ENCODE measurements at regions of chr22 and their contacts with region 1.

Region 1: GRCh38 chr22:37623075-37624016 is 14.7 kb downstream of the GGA1 start:
- DNase-seq: peak; percentile 85
- H3K4me3 ChIP-seq: no peak overlapping the region
- H3K27ac ChIP-seq: peak overlapping the region in 3 of 4 donors; percentile 82 to 92 (median 91)
- H3K4me1 ChIP-seq: peaks cover 0 to 50% (median 38%) of the 10 kb centered on the region in 4 donors
- H3K27me3 ChIP-seq: no peaks in the 10 kb centered on the region
- CTCF ChIP-seq: peak; percentile 51 to 99 (median 65)
- EP300 ChIP-seq: no peak
- POLR2A ChIP-seq: no peak

Region 2: GRCh38 chr22:37476389-37477329 is 146.7 kb before region 1 on chr22:
- intact Hi-C with region 1: no loop called
- DNase-seq: no peak
- H3K4me3 ChIP-seq: no peak overlapping the region
- H3K27ac ChIP-seq: no peak overlapping the region
- H3K4me1 ChIP-seq: no peaks in the 10 kb centered on the region
- H3K27me3 ChIP-seq: peaks cover 5 to 80% (median 22%) of the 10 kb centered on the region in 3 donors
- CTCF ChIP-seq: no peak
- EP300 ChIP-seq: no peak
- POLR2A ChIP-seq: no peak

Region 3: GRCh38 chr22:37676736-37677492 is 53.6 kb after region 1 on chr22:
- intact Hi-C with region 1: loop called (anchors 2 kb)
- DNase-seq: peak; percentile 96
- H3K4me3 ChIP-seq: peak overlapping the region; percentile 48 to 67 (median 59)
- H3K27ac ChIP-seq: peak overlapping the region; percentile 92 to 99 (median 95)
- H3K4me1 ChIP-seq: peaks cover 0 to 73% (median 63%) of the 10 kb centered on the region in 4 donors
- H3K27me3 ChIP-seq: no peaks in the 10 kb centered on the region
- CTCF ChIP-seq: no peak
- EP300 ChIP-seq: peak in 2 of 4 donors; percentile 24 to 49
- POLR2A ChIP-seq: peak; percentile 19 to 37

Region 4: GRCh38 chr22:37752466-37753087 is 129.2 kb after region 1 on chr22:
- intact Hi-C with region 1: loop called (anchors 5 kb)
- DNase-seq: peak; percentile 97
- H3K4me3 ChIP-seq: peak overlapping the region in 1 of 4 donors; percentile 12
- H3K27ac ChIP-seq: peak overlapping the region; percentile 91 to 98 (median 98)
- H3K4me1 ChIP-seq: peaks cover 0 to 71% (median 68%) of the 10 kb centered on the region in 4 donors
- H3K27me3 ChIP-seq: no peaks in the 10 kb centered on the region
- CTCF ChIP-seq: peak in 1 of 4 experiments; percentile 23
- EP300 ChIP-seq: peak in 1 of 4 donors; percentile 32
- POLR2A ChIP-seq: no peak

Region 5: GRCh38 chr22:37792494-37792893 is 169.1 kb after region 1 on chr22:
- intact Hi-C with region 1: loop called (anchors 5 kb)
- DNase-seq: no peak
- H3K4me3 ChIP-seq: no peak overlapping the region
- H3K27ac ChIP-seq: peak overlapping the region in 1 of 4 donors; percentile 53
- H3K4me1 ChIP-seq: no peaks in the 10 kb centered on the region
- H3K27me3 ChIP-seq: no peaks in the 10 kb centered on the region
- CTCF ChIP-seq: no peak
- EP300 ChIP-seq: no peak
- POLR2A ChIP-seq: no peak

Region 6: GRCh38 chr22:37953437-37954179 is 330.3 kb after region 1 on chr22 and contains the starts of genes C22orf23 and POLR2F:
- intact Hi-C with region 1: loop called (anchors 10 kb)
- DNase-seq: peak; percentile 98
- H3K4me3 ChIP-seq: peak within 1 kb of the TSS; percentile 69 to 80 (median 72)
- H3K27ac ChIP-seq: peak within 1 kb of the TSS; percentile 67 to 83 (median 78)
- H3K4me1 ChIP-seq: peaks cover 0 to 27% (median 23%) of the 10 kb centered on the region in 4 donors
- H3K27me3 ChIP-seq: no peaks in the 10 kb centered on the region
- CTCF ChIP-seq: no peak
- EP300 ChIP-seq: no peak
- POLR2A ChIP-seq: peak; percentile 40 to 72
- total RNA-seq, gene C22orf23: 0.36 TPM in 1 of 4 donors, not detected in the others
- total RNA-seq, gene POLR2F: 47.9 to 149 (median 71.1) TPM

Measured in sigmoid colon (tissue), 7 donors.